ENCODE measurements at regions of chr12 and their contacts with region 1.

Region 1: GRCh38 chr12:59834659-59835474 is 239.0 kb downstream of the SLC16A7 start:
- DNase-seq: no peak
- ATAC-seq: no peak
- H3K4me3 Mint-ChIP-seq: no peak overlapping the region
- H3K27ac Mint-ChIP-seq: no peak overlapping the region
- H3K4me1 Mint-ChIP-seq: no peaks in the 10 kb centered on the region
- H3K27me3 Mint-ChIP-seq: peaks cover 2% of the 10 kb centered on the region

Region 2: DNA sequence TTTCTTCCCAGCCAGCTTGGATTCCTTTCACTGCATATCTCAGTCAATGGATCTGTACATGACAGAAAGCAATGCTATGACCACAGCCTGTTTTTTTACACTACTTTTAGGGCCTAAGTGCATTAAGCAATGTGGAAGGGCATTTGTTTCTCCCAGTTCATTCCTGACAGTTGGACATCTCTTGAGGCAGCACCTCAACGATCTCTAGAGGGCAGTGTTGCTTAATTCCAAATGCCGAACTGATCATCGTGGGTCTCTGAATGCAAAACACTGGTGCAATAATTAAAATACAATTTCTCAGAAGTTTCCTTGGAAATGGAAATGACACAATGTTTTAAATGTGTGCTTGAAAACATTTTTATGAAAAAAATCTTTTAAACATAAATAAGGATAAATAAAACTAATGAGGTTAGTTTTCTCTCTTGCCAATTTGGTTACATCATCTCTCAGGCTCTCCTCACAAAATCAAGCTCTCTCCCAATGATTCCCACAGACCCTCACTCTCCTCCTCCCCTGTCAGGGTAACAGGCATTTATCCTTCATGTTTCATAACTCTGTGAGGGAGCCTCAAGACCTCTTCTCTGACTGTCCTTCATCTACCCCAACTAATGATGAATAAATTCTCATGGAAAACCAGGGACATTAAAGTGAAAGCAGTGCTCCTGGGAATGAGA is 431.5 kb before region 1 on chr12:
- CTCF ChIA-PET with region 1: interaction called, 31 read pairs
- POLR2A ChIA-PET with region 1: no interaction called
- DNase-seq: peak; percentile 58
- ATAC-seq: peak; percentile 61
- H3K4me3 Mint-ChIP-seq: no peak overlapping the region
- H3K27ac Mint-ChIP-seq: no peak overlapping the region
- H3K4me1 Mint-ChIP-seq: peaks cover 14% of the 10 kb centered on the region
- H3K27me3 Mint-ChIP-seq: peaks cover 3% of the 10 kb centered on the region